Heart left ventricle (tissue), 16 donors: ENCODE measurements at regions of chr22 and their contacts with region 1.

Region 1: DNA sequence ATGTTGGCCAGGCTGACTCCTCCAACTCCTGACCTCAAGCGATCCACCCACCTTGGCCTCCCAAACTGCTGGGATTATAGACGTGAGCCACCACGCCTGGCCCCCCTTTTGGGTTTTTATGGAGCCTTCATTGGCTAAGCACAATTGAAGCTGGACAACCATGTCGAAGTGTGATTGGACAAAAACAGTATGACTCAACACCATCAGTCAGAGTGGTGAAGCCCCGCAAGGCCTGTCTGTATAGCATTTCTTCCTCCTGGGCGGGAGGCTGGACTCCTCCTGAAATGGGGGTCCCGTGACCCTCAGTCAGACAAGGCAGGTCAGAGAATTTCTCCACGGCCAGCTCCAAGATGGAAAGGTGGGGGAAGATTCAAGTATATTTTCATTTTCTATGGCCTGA is 3.1 kb upstream of the PARVB start:
- DNase-seq: peak in 1 of 5 donors; percentile 20
- ATAC-seq: no peak
- H3K4me3 ChIP-seq: no peak overlapping the region
- H3K27ac ChIP-seq: peak overlapping the region in 1 of 12 donors; percentile 13
- H3K4me1 ChIP-seq: peaks cover 0 to 57% (median 24%) of the 10 kb centered on the region in 12 donors
- H3K27me3 ChIP-seq: no peaks in the 10 kb centered on the region
- CTCF ChIP-seq: no peak
- POLR2A ChIP-seq: no peak

Region 2: DNA sequence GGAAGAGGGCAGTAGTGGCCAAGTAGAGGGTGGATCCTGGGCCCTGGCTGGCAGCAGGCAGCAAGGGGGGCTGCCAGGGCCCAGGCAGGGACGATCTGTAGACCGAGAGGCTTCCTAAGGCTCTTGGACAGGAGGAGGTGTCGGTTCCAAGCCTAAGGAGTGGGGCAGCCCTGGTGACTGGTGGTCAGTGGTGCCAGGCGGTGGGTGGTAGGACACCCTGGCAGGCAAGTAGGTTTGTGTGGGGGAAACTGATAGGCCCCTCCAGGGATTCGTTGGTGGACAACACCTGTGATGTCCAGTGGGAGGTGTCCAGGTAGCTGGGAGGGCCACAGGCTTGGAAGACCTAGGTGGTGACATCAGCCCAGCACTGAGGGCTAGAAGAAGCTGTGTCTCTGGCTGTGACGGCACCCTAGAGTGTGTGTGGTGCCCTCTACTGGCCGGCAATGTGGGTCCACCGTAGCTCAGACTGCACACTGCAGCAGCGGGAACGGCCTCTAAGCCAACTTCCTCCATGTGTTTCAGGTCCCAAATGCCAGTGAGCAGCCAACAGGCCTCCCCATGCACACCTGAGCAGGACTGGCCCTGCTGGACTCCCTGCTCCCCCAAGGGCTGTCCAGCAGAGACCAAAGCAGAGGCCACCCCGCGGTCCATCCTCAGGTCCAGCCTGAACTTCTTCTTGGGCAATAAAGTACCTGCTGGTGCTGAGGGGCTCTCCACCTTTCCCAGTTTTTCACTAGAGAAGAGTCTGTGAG is 75.2 kb before region 1 on chr22:
- intact Hi-C with region 1: no loop called
- DNase-seq: peak; percentile 35 to 73 (median 51)
- ATAC-seq: peak; percentile 58 to 86 (median 80)
- H3K4me3 ChIP-seq: no peak overlapping the region
- H3K27ac ChIP-seq: no peak overlapping the region
- H3K4me1 ChIP-seq: no peaks in the 10 kb centered on the region
- H3K27me3 ChIP-seq: peaks cover 0 to 7% (median 0%) of the 10 kb centered on the region in 9 donors
- CTCF ChIP-seq: peak; percentile 32 to 69 (median 50)
- POLR2A ChIP-seq: no peak

Region 3: GRCh38 chr22:44003405-44004103 is 17.4 kb before region 1 on chr22:
- intact Hi-C with region 1: loop called in 1 of 10 experiments (anchors 2 kb)
- DNase-seq: peak in 1 of 5 donors; percentile 32
- ATAC-seq: peak in 1 of 4 donors; percentile 20
- H3K4me3 ChIP-seq: no peak overlapping the region
- H3K27ac ChIP-seq: no peak overlapping the region
- H3K4me1 ChIP-seq: peaks cover 0 to 28% (median 4%) of the 10 kb centered on the region in 12 donors
- H3K27me3 ChIP-seq: no peaks in the 10 kb centered on the region
- CTCF ChIP-seq: peak in 8 of 12 donors; percentile 11 to 46 (median 31)
- POLR2A ChIP-seq: no peak

Region 4: DNA sequence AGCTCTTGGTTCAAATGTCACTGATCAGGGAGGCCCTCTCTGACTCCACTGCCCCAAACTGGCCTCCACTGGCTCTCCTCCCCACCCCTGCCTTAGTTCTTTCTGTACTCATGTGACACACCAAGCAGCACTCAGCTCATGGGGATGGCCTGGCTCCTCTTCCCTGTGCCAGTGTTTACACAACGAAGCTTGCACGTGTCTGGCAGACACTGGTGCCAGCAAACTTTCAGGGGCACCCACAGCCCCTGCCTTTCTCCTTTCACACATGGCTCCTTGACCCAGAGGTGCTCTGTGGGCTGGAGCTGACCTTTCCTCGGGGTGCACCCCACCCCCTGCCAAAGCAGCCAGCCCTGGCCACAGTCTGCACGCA is 122.1 kb after region 1 on chr22:
- intact Hi-C with region 1: no loop called
- DNase-seq: peak in 1 of 5 donors; percentile 43
- ATAC-seq: peak in 1 of 4 donors; percentile 21
- H3K4me3 ChIP-seq: no peak overlapping the region
- H3K27ac ChIP-seq: peak overlapping the region in 2 of 12 donors; percentile 80 to 86
- H3K4me1 ChIP-seq: peaks cover 0 to 65% (median 6%) of the 10 kb centered on the region in 12 donors
- H3K27me3 ChIP-seq: no peaks in the 10 kb centered on the region
- CTCF ChIP-seq: no peak
- POLR2A ChIP-seq: no peak